ENCODE measurements at regions of chrX and their contacts with region 1.

Region 1: GRCh38 chrX:47644557-47645091 is 5.7 kb downstream of the ELK1 start:
- DNase-seq: peak; percentile 71
- H3K4me3 ChIP-seq: no peak overlapping the region
- H3K27ac ChIP-seq: no peak overlapping the region
- H3K4me1 ChIP-seq: no peaks in the 10 kb centered on the region
- H3K27me3 ChIP-seq: no peaks in the 10 kb centered on the region
- CTCF ChIP-seq: peak; percentile 58

Region 2: GRCh38 chrX:46485897-46486296 is 1158.7 kb before region 1 on chrX:
- CTCF ChIA-PET with region 1: no interaction called
- POLR2A ChIA-PET with region 1: no interaction called
- intact Hi-C with region 1: no loop called
- DNase-seq: no peak
- H3K4me3 ChIP-seq: no peak overlapping the region
- H3K27ac ChIP-seq: no peak overlapping the region
- H3K4me1 ChIP-seq: no peaks in the 10 kb centered on the region
- H3K27me3 ChIP-seq: no peaks in the 10 kb centered on the region
- CTCF ChIP-seq: no peak

Region 3: GRCh38 chrX:47420265-47420664 is 224.4 kb before region 1 on chrX:
- CTCF ChIA-PET with region 1: no interaction called
- POLR2A ChIA-PET with region 1: no interaction called
- intact Hi-C with region 1: no loop called
- DNase-seq: no peak
- H3K4me3 ChIP-seq: no peak overlapping the region
- H3K27ac ChIP-seq: no peak overlapping the region
- H3K4me1 ChIP-seq: no peaks in the 10 kb centered on the region
- H3K27me3 ChIP-seq: no peaks in the 10 kb centered on the region
- CTCF ChIP-seq: no peak

Region 4: GRCh38 chrX:47497273-47497672 is 147.4 kb before region 1 on chrX:
- CTCF ChIA-PET with region 1: interaction called, 5 read pairs
- POLR2A ChIA-PET with region 1: no interaction called
- intact Hi-C with region 1: loop called (anchors 5 kb)
- DNase-seq: peak; percentile 24
- H3K4me3 ChIP-seq: no peak overlapping the region
- H3K27ac ChIP-seq: no peak overlapping the region
- H3K4me1 ChIP-seq: peaks cover 13% of the 10 kb centered on the region
- H3K27me3 ChIP-seq: no peaks in the 10 kb centered on the region
- CTCF ChIP-seq: peak; percentile 65

Region 5: GRCh38 chrX:47560831-47561652 is 83.6 kb before region 1 on chrX and contains the start of gene ARAF:
- CTCF ChIA-PET with region 1: no interaction called
- POLR2A ChIA-PET with region 1: no interaction called
- intact Hi-C with region 1: loop called (anchors 5 kb)
- DNase-seq: peak; percentile 99
- H3K4me3 ChIP-seq: peak within 1 kb of the TSS; percentile 69
- H3K27ac ChIP-seq: peak within 1 kb of the TSS; percentile 93
- H3K4me1 ChIP-seq: no peaks in the 10 kb centered on the region
- H3K27me3 ChIP-seq: no peaks in the 10 kb centered on the region
- CTCF ChIP-seq: no peak
- total RNA-seq, gene ARAF: 60.0 and 60.9 TPM in 2 replicates

Region 6: GRCh38 chrX:47706575-47706974 is 62.0 kb after region 1 on chrX:
- CTCF ChIA-PET with region 1: no interaction called
- POLR2A ChIA-PET with region 1: no interaction called
- intact Hi-C with region 1: no loop called
- DNase-seq: no peak
- H3K4me3 ChIP-seq: no peak overlapping the region
- H3K27ac ChIP-seq: no peak overlapping the region
- H3K4me1 ChIP-seq: no peaks in the 10 kb centered on the region
- H3K27me3 ChIP-seq: no peaks in the 10 kb centered on the region
- CTCF ChIP-seq: no peak

Measured in A673 (cell line).